ENCODE measurements at regions of chr2 and their contacts with region 1.

Region 1: GRCh38 chr2:189661148-189661956 is at the start of gene ASNSD1:
- DNase-seq: peak; percentile 98
- H3K4me3 Mint-ChIP-seq: no peak within 1 kb of the TSS
- H3K27ac Mint-ChIP-seq: no peak within 1 kb of the TSS
- H3K4me1 Mint-ChIP-seq: peaks cover 51% of the 10 kb centered on the region
- H3K27me3 Mint-ChIP-seq: no peaks in the 10 kb centered on the region
- total RNA-seq, gene ASNSD1: 44.5 to 47.0 TPM

Region 2: DNA sequence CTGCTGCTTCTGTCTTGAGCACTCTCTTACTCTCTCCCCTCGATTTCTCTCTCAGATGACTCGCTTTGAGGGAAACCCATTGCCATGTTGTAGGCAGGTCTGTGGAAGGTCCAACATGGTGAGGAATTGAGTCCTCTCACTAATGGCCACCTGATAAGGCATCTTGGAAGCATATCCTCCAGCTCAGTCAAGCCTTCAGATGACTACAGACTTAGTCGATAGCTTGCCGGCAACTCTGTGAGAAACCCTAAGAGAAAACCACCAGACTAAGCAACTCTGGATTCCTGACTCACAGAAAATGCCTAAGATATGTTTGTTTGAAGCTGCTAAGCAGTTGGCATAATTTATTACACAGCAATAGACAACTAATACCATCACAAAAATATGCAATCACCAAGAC is 168.9 kb before region 1 on chr2:
- CTCF ChIA-PET with region 1: no interaction called
- POLR2A ChIA-PET with region 1: no interaction called
- intact Hi-C with region 1: no loop called
- DNase-seq: no peak
- H3K4me3 Mint-ChIP-seq: no peak overlapping the region
- H3K27ac Mint-ChIP-seq: no peak overlapping the region
- H3K4me1 Mint-ChIP-seq: no peaks in the 10 kb centered on the region
- H3K27me3 Mint-ChIP-seq: peaks cover 15% of the 10 kb centered on the region

Region 3: GRCh38 chr2:189580658-189581353 is 80.5 kb before region 1 on chr2 and contains the start of gene SLC40A1:
- CTCF ChIA-PET with region 1: interaction called, 4 read pairs
- POLR2A ChIA-PET with region 1: no interaction called
- intact Hi-C with region 1: loop called (anchors 5 kb)
- DNase-seq: peak; percentile 75
- H3K4me3 Mint-ChIP-seq: peak within 1 kb of the TSS; percentile 83
- H3K27ac Mint-ChIP-seq: peak within 1 kb of the TSS; percentile 77
- H3K4me1 Mint-ChIP-seq: peaks cover 42% of the 10 kb centered on the region
- H3K27me3 Mint-ChIP-seq: peaks cover 4% of the 10 kb centered on the region
- total RNA-seq, gene SLC40A1: 4.7 to 4.8 TPM

Region 4: DNA sequence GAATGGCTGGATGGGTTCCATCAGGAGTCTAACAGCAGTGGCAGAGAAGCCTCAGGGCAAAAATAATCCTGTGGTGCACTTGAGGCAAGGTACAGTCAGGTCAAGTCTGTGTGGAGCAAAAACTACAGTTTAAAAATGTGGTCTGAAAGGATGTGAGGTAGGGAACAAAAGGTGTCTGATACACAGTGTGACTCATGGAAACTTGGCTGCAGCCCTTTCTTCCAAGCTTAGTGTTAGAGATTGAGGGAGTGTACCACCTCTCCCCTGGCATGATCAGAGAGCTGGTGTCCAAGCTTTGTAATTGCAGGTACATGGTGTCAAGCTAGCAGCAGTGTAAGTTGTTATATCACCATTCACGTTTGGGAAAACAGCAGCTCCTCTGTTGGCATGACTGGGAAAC is 22.0 kb after region 1 on chr2:
- CTCF ChIA-PET with region 1: interaction called, 12 read pairs
- POLR2A ChIA-PET with region 1: interaction called, 6 read pairs
- intact Hi-C with region 1: no loop called
- DNase-seq: peak; percentile 29
- H3K4me3 Mint-ChIP-seq: no peak overlapping the region
- H3K27ac Mint-ChIP-seq: no peak overlapping the region
- H3K4me1 Mint-ChIP-seq: peaks cover 52% of the 10 kb centered on the region
- H3K27me3 Mint-ChIP-seq: no peaks in the 10 kb centered on the region

Region 5: GRCh38 chr2:189762551-189763298 is 101.4 kb after region 1 on chr2 and contains the start of gene OSGEPL1:
- CTCF ChIA-PET with region 1: interaction called, 23 read pairs
- POLR2A ChIA-PET with region 1: interaction called, 9 read pairs
- intact Hi-C with region 1: loop called (anchors 1 kb)
- DNase-seq: peak; percentile 95
- H3K4me3 Mint-ChIP-seq: peak within 1 kb of the TSS; percentile 91
- H3K27ac Mint-ChIP-seq: peak within 1 kb of the TSS; percentile 96
- H3K4me1 Mint-ChIP-seq: peaks cover 9% of the 10 kb centered on the region
- H3K27me3 Mint-ChIP-seq: no peaks in the 10 kb centered on the region
- total RNA-seq, gene OSGEPL1: 11.1 to 11.7 TPM

Region 6: DNA sequence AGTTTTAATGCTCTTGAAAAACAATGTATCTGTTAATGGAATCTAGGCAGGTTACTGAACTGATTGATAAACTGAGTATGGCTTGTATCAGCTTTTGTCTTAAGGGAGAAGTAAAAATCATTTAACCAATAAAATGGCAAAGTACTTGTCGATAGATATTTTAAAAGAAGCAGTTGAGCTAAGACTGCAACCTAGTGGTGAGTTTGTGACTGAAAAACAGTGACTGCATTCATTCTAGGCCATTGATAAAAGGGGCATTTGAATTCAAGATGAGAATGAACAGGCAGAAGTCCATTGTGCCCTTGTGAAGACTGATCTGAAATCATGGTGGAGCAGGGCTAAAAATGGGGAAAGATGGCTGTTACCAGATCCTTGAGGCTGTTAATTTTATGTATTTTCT is 460.6 kb after region 1 on chr2:
- CTCF ChIA-PET with region 1: no interaction called
- POLR2A ChIA-PET with region 1: no interaction called
- intact Hi-C with region 1: loop called (anchors 1 kb)
- DNase-seq: no peak
- H3K4me3 Mint-ChIP-seq: no peak overlapping the region
- H3K27ac Mint-ChIP-seq: no peak overlapping the region
- H3K4me1 Mint-ChIP-seq: peaks cover 8% of the 10 kb centered on the region
- H3K27me3 Mint-ChIP-seq: peaks cover under 1% of the 10 kb centered on the region

Region 7: GRCh38 chr2:190408538-190409271 is 747.4 kb after region 1 on chr2:
- CTCF ChIA-PET with region 1: no interaction called
- POLR2A ChIA-PET with region 1: no interaction called
- intact Hi-C with region 1: loop called (anchors 5 kb)
- DNase-seq: peak; percentile 80
- H3K4me3 Mint-ChIP-seq: peak overlapping the region; percentile 82
- H3K27ac Mint-ChIP-seq: peak overlapping the region; percentile 88
- H3K4me1 Mint-ChIP-seq: peaks cover 40% of the 10 kb centered on the region
- H3K27me3 Mint-ChIP-seq: no peaks in the 10 kb centered on the region

Measured in activated CD4-positive, alpha-beta memory T cell treated with anti-CD3 and anti-CD28 coated beads for 36 hours (primary cell).